ENCODE measurements at regions of chr3 and their contacts with region 1.

Region 1: GRCh38 chr3:77195766-77196545 is 156.1 kb downstream of the ROBO2 start:
- DNase-seq: no peak
- H3K4me3 ChIP-seq: no peak overlapping the region
- H3K27ac ChIP-seq: no peak overlapping the region
- H3K4me1 ChIP-seq: no peaks in the 10 kb centered on the region
- H3K27me3 ChIP-seq: no peaks in the 10 kb centered on the region
- CTCF ChIP-seq: no peak
- POLR2A ChIP-seq: no peak

Region 2: GRCh38 chr3:77460326-77460725 is 264.4 kb after region 1 on chr3:
- intact Hi-C with region 1: loop called (anchors 5 kb)
- DNase-seq: no peak
- H3K4me3 ChIP-seq: no peak overlapping the region
- H3K27ac ChIP-seq: no peak overlapping the region
- H3K4me1 ChIP-seq: no peaks in the 10 kb centered on the region
- H3K27me3 ChIP-seq: no peaks in the 10 kb centered on the region
- CTCF ChIP-seq: no peak
- POLR2A ChIP-seq: no peak